ENCODE measurements at regions of chr10 and their contacts with region 1.

Region 1: DNA sequence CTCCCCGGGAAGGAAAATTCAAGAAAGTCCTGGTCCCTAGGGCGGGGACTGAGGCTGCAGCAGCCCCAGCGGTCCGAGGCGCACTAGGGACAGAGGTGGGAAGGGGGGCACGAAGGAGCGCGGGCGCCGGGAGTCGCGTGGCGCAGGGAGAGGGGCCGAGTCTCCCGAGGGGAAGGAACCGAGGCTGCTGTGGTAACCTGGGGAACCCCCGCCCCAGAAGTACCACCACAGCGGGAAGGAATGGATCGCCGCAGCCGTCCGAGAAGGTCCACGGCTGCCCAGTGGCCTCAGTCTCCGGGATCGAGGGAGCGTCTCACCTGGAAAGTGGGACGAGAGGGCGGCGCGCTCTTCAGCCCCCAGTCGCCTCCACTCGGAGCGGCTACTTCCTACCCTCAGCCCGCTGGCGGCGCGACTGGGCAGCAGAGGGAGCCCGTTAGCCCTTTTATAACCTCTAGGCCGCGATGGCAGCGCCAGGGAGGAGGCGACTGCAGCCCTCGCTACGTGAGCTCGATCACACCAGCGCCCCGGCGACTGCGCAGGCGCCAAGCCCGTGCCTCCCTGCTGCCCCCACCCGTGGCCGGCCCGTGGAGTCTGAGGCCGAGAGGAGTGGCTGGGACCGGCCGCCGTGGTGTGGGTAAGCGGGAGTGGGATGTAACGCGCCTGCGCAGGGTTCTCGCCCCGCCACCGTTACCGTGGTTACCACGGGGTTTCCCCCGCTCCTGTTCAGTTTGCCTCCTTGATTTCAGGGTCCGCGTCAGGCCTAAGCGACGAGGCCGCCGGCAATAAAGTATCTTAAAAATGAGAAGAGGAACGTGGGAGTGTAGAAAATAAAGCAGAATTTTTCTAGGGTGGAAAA is at the start of gene P4HA1:
- DNase-seq: peak; percentile 99
- H3K4me3 ChIP-seq: peak within 1 kb of the TSS; percentile 49
- H3K27ac ChIP-seq: peak within 1 kb of the TSS; percentile 97 to 99
- H3K4me1 ChIP-seq: peaks cover 5% of the 10 kb centered on the region
- H3K27me3 ChIP-seq: no peaks in the 10 kb centered on the region
- CTCF ChIP-seq: peak; percentile 62 to 92 (median 81)
- EP300 ChIP-seq: no peak
- POLR2A ChIP-seq: peak; percentile 93
- total RNA-seq, gene P4HA1: 28.3 to 74.9 (median 39.7) TPM

Region 2: DNA sequence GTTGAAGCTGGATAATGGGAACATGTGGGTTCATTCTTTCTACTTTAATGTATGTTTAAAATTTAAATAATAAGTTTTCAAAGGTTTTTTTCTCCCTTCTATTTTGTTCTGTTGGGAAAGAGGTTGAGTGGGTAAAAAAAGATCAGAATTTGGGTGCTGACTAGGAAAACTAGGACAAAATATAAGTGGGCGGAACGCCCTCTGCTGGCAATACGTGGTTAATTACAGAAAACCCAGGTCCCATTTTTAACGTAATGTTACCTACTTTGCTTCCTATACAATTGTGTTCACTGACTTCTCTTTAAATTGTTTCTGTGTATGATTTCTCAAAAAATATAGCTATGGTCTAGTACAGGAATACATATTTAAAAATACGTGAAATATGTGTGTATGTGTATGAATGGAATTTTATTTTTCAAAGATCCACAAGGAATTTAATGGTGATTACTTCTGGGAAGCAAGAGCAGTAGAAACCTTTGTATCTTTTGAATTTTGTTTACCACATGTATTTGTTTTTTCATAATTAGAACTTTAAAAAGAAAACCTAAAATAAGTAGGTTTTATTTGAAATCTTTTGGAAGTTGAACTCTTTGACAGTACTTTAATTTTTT is 62.5 kb after region 1 on chr10:
- intact Hi-C with region 1: loop called in 1 of 4 experiments (anchors 2 kb)
- DNase-seq: peak; percentile 42 to 74 (median 62)
- H3K4me3 ChIP-seq: no peak overlapping the region
- H3K27ac ChIP-seq: no peak overlapping the region
- H3K4me1 ChIP-seq: peaks cover 1% of the 10 kb centered on the region
- H3K27me3 ChIP-seq: no peaks in the 10 kb centered on the region
- CTCF ChIP-seq: peak; percentile 59 to 73 (median 66)
- EP300 ChIP-seq: no peak
- POLR2A ChIP-seq: no peak

Region 3: GRCh38 chr10:73244866-73245477 is 148.3 kb after region 1 on chr10:
- intact Hi-C with region 1: no loop called
- DNase-seq: no peak
- H3K4me3 ChIP-seq: no peak overlapping the region
- H3K27ac ChIP-seq: no peak overlapping the region
- H3K4me1 ChIP-seq: no peaks in the 10 kb centered on the region
- H3K27me3 ChIP-seq: no peaks in the 10 kb centered on the region
- CTCF ChIP-seq: no peak
- EP300 ChIP-seq: no peak
- POLR2A ChIP-seq: no peak